Panc1 (cell line): ENCODE measurements at regions of chr20 and their contacts with region 1.

Region 1: GRCh38 chr20:54199721-54200176 is 8.1 kb upstream of the PFDN4 start:
- DNase-seq: peak; percentile 73
- ATAC-seq: peak; percentile 72
- H3K4me3 ChIP-seq: no peak overlapping the region
- H3K27ac ChIP-seq: peak overlapping the region; percentile 39; the same call in 1 of the 2 replicates
- H3K4me1 ChIP-seq: peaks cover 8% of the 10 kb centered on the region
- H3K27me3 ChIP-seq: no peaks in the 10 kb centered on the region
- CTCF ChIP-seq: peak; percentile 96

Region 2: DNA sequence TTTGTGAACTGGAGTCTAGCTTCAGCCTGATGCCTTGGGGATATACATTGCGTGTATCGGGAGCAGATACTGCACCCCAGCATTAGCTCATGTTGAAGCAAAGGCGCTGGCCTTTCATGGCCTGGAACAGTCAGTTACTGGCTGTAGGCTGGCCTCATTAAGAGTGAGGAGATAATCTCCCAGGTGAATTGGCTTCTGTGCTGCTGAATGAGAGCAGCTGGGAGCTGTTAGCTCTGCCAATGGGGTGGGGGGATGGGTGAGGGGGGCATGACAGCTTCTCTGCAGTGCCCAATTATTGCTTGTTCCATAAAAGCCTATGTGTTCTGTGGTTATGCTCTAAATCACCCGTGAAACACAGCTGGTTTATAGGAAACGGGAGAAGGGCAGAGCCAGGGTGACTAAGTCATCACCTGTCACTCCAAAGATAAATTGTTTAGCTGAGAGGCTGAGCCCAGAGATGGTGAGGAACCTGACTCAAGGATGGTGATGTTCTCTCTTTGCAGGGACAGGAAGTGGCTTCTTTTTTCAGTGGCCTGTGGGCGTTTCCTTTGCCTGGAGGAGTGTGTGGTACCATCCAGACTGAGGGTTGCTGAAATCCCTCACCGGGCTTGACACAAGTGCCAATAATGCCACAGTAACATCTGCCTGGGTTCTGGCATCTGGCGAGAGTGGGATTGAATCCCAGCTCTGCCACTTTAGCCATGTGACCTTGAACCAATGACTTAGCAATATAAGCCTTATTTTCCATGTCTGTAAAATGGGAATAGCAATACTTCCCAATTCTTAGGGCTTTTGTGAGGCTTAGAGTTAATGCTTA is 300.2 kb before region 1 on chr20:
- CTCF ChIA-PET with region 1: no interaction called
- POLR2A ChIA-PET with region 1: no interaction called
- in situ Hi-C with region 1: no loop called
- intact Hi-C with region 1: no loop called
- DNase-seq: peak; percentile 87
- ATAC-seq: peak; percentile 85
- H3K4me3 ChIP-seq: no peak overlapping the region
- H3K27ac ChIP-seq: peak overlapping the region; percentile 100
- H3K4me1 ChIP-seq: peaks cover 61% of the 10 kb centered on the region
- H3K27me3 ChIP-seq: no peaks in the 10 kb centered on the region
- CTCF ChIP-seq: no peak

Region 3: GRCh38 chr20:54097236-54097529 is 102.6 kb before region 1 on chr20:
- CTCF ChIA-PET with region 1: interaction called, 6 read pairs
- POLR2A ChIA-PET with region 1: no interaction called
- in situ Hi-C with region 1: no loop called
- intact Hi-C with region 1: loop called (anchors 1 kb)
- DNase-seq: no peak
- ATAC-seq: peak; percentile 35; the same call in 1 of the 2 replicates
- H3K4me3 ChIP-seq: no peak overlapping the region
- H3K27ac ChIP-seq: peak overlapping the region; percentile 44; the same call in 1 of the 2 replicates
- H3K4me1 ChIP-seq: peaks cover 17% of the 10 kb centered on the region
- H3K27me3 ChIP-seq: no peaks in the 10 kb centered on the region
- CTCF ChIP-seq: no peak

Region 4: DNA sequence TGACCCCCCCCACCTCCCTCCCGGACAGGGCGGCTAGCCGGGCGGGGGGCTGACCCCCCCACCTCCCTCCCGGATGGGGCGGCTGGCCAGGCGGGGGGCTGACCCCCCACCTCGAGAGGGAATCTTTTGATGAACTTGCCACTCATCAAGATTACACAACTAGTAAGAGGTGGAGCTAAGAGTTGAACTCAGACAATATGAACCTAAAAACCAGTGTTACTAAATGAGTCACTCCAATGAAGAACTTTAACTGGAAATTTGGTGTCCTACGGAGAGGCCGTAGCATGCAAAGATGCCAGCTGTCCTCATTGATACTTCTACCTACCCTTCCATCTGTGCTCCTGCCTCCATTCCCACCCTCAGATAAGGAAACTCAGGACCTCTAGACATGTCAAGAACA is 50.9 kb after region 1 on chr20:
- CTCF ChIA-PET with region 1: no interaction called
- POLR2A ChIA-PET with region 1: no interaction called
- in situ Hi-C with region 1: no loop called
- intact Hi-C with region 1: no loop called
- DNase-seq: no peak
- ATAC-seq: no peak
- H3K4me3 ChIP-seq: no peak overlapping the region
- H3K27ac ChIP-seq: no peak overlapping the region
- H3K4me1 ChIP-seq: no peaks in the 10 kb centered on the region
- H3K27me3 ChIP-seq: no peaks in the 10 kb centered on the region
- CTCF ChIP-seq: no peak